Dendritic cell treated with granulocyte-macrophage colony-stimulating factor and Interleukin-4, amounts not matched to agents 40 ng/mL and 50 ng/mL, for 4 days (primary cell): ENCODE measurements at regions of chr10 and their contacts with region 1.

Region 1: DNA sequence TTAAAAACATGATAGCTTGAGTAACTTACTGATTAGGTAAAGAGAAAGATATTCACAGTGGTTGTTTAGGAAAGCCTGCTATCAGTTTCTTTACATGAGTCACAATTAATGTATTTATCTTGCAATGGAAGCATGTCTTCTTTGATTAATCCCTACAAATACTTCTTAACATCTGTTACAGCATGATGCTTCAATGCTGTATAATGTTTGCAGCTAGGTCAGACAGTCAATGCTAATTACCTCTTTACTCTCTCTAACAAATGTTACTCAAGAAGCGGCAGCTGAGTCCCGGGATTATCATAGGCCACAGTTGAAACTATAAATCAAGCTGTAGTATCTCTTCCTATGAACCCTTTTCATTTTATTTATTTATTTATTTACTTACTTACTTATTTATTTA is 33.2 kb downstream of the ACBD5 start:
- H3K4me3 Mint-ChIP-seq: no peak overlapping the region
- H3K27ac Mint-ChIP-seq: no peak overlapping the region
- H3K4me1 Mint-ChIP-seq: no peaks in the 10 kb centered on the region
- H3K27me3 Mint-ChIP-seq: no peaks in the 10 kb centered on the region

Region 2: DNA sequence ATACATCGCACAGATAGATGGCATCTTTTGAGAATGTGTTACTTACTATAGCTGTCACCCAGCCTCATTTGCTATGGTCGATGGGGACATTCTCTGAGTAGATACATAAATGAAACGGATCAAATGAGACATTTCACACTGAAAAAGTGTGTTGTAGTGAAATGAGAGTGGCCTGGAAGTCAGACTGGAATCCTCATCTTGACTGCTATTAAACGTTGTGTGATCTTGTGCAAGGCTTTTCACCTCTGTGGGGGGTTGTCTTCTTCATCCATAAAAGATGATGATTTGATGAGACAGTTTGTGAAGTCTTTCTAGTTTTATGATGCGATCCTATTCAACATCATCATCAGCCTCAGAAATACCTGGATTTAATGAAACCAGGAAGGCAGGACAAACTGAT is 1428.7 kb before region 1 on chr10:
- intact Hi-C with region 1: no loop called
- H3K4me3 Mint-ChIP-seq: no peak overlapping the region
- H3K27ac Mint-ChIP-seq: no peak overlapping the region
- H3K4me1 Mint-ChIP-seq: no peaks in the 10 kb centered on the region
- H3K27me3 Mint-ChIP-seq: peaks cover under 1% of the 10 kb centered on the region

Region 3: DNA sequence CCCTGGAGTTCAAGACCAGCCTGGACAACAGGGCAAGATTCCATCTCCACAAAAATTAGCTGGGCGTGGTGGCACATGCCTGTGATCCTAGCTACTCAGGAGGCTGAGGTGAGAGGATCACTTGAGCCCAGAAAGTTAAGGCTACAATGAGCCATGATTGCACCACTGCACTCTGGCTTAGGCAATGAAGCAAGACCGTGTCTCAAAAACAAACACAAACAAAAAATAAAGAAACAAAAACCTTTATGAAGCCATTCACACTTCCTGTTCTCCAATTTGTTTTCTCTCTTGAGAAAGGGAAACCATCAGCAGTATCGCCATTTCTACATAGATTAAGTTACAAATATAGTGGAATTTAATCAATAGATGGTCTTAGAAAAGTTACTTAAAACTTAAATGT is 73.0 kb before region 1 on chr10:
- intact Hi-C with region 1: loop called (anchors 10 kb)
- H3K4me3 Mint-ChIP-seq: no peak overlapping the region
- H3K27ac Mint-ChIP-seq: peak overlapping the region; percentile 48
- H3K4me1 Mint-ChIP-seq: peaks cover 16% of the 10 kb centered on the region
- H3K27me3 Mint-ChIP-seq: no peaks in the 10 kb centered on the region

Region 4: GRCh38 chr10:27169849-27170248 is 37.5 kb before region 1 on chr10:
- intact Hi-C with region 1: loop called (anchors 5 kb)
- H3K4me3 Mint-ChIP-seq: no peak overlapping the region
- H3K27ac Mint-ChIP-seq: no peak overlapping the region
- H3K4me1 Mint-ChIP-seq: no peaks in the 10 kb centered on the region
- H3K27me3 Mint-ChIP-seq: no peaks in the 10 kb centered on the region

Region 5: DNA sequence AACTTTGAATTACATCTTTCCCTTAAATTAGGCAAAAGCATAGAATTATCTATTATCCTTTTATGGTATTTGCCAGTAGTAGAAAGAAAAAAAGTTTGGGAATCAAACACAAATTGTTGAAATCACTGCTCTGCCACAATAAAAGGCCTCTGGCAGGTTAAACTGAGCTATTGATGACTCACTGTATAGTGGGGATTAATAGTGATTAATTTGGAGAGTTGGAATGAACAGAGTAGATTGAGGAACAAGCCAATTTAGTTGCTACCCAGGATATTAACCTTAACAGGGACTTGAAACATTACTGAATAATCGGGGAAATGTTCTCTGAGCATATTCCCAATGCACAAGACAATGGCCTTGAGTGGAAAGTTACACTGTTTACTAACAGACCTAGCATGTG is 19.1 kb before region 1 on chr10:
- intact Hi-C with region 1: no loop called
- H3K4me3 Mint-ChIP-seq: no peak overlapping the region
- H3K27ac Mint-ChIP-seq: no peak overlapping the region
- H3K4me1 Mint-ChIP-seq: peaks cover 5% of the 10 kb centered on the region
- H3K27me3 Mint-ChIP-seq: no peaks in the 10 kb centered on the region